Tibial artery (tissue), 4 donors: ENCODE measurements at regions of chr16 and their contacts with region 1.

Region 1: DNA sequence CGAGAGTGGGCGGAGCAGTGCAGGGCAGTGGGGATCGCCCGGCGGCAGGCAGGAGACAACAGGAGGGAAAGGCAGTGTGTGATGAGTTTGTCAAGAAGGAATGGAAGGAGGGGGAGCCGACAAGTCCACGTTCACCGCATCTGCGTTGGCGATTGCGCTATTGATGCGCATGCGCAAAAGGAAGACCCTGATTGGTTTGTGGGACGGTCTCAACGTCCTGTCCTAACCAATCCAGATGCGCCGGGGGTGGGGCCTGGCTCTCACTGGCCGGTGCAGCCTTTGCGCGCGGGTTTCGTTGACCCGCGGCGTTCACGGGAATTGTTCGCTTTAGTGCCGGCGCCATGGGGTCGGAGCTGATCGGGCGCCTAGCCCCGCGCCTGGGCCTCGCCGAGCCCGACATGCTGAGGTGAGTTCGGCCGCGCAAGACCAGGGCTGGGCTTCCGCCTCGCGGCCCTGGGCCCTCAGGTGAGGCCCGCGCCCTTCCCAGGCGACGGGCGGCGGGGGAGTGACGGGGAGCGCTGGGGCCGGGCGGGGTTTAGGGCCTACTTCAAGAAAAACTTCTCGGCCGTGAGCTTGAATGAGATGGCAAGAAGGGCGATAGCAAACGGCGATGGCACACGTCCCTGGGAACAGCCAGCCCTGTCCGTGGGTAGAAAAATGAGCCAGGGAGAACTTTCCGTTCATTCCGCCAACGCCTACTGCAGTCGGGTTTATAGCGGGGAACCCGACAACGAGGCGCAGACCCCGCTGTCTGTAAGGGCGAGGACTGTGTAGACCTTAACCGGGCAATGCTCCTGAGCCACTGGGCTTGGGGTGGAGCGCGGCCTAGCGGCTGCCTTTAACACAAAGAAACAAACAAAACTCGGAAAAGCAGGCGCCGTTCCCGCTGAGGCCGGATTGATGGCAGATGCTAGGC is at the start of gene ORC6:
- DNase-seq: peak; percentile 98 to 99
- H3K4me3 ChIP-seq: peak within 1 kb of the TSS; percentile 75 to 78
- H3K27ac ChIP-seq: peak within 1 kb of the TSS; percentile 89 to 92
- H3K4me1 ChIP-seq: peaks cover 9 to 31% (median 28%) of the 10 kb centered on the region in 4 donors
- H3K27me3 ChIP-seq: no peaks in the 10 kb centered on the region
- CTCF ChIP-seq: peak; percentile 5 to 27

Region 2: DNA sequence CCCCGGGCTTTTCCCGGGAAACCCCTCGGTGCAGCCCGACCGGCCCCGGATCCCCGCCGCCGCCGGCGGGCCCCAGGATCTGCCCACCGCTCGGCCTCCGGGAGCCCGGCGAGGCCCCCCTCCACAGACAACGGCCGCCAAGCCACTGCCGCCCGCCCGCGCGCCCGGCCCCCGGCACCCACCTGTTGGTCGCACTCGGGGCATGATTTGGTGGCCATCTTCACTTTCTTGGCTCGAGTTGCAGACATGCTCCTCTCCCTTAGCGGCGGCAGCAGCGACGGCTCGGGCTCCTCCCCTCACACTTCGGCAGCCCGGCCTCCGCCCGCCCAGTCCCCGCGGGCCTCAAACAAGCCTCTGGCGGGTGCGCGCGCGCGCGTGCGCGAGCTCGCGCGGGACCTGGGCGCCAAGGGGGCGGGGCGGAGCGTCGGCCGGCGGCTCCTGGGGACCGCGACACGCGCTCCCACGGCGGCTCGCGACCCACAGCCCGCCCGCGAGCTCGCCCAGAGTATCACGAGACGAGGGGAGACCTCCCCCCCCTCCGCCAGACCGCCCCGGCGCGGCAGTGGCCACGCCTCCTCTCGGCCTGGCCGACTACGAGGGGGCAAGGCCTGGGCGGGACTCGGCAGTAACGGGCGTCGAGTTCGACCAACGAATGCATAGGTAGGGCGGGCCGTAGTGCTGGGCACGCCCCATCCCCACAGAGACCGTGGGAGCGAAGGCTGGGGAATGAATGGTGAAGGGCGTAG is 141.5 kb after region 1 on chr16 and contains the start of gene C16orf87:
- intact Hi-C with region 1: loop called (anchors 5 kb)
- DNase-seq: peak; percentile 93 to 94
- H3K4me3 ChIP-seq: peak within 1 kb of the TSS; percentile 69 to 90
- H3K27ac ChIP-seq: peak within 1 kb of the TSS; percentile 86 to 87
- H3K4me1 ChIP-seq: peaks cover 0 to 14% (median 5%) of the 10 kb centered on the region in 4 donors
- H3K27me3 ChIP-seq: no peaks in the 10 kb centered on the region
- CTCF ChIP-seq: no peak

Region 3: GRCh38 chr16:46883690-46884512 is 194.3 kb after region 1 on chr16 and contains the start of gene GPT2:
- intact Hi-C with region 1: loop called (anchors 5 kb)
- DNase-seq: peak; percentile 98
- H3K4me3 ChIP-seq: peak within 1 kb of the TSS; percentile 75 to 77
- H3K27ac ChIP-seq: peak within 1 kb of the TSS; percentile 41 to 45
- H3K4me1 ChIP-seq: peaks cover 0 to 10% (median 3%) of the 10 kb centered on the region in 4 donors
- H3K27me3 ChIP-seq: peaks cover 0 to 2% of the 10 kb centered on the region in 2 donors
- CTCF ChIP-seq: peak; percentile 11 to 32

Region 4: DNA sequence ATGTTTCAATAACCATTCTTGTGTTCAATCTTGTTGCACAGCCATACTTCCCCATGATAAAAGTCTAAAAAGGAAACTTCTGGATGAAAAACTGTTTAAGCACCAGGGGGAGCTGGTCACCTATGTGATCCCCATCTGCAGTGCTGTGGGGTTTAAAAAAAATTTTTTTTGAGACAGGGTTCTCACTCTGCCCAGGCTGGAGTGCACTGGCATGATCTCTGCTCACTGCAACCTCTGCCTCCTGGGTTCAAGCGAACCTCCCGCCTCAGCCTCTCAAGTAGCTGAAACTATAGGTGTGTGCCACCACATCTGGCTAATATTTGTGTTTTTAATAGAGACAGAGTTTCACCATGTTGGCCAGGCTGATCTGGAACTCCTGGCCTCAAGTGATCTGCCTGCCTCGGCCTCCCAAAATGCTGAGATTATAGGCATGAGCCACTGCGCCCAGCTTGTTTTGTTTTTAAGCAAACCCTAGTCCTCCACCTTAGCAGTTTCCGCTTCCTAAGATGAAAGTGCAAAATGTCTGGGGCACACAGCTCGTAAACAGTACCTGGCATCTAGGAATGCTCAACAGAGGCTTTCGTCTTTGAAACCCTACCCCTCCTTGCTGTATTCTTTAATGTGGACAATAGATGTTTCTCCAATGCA is 258.4 kb after region 1 on chr16:
- intact Hi-C with region 1: no loop called
- DNase-seq: no peak
- H3K4me3 ChIP-seq: no peak overlapping the region
- H3K27ac ChIP-seq: no peak overlapping the region
- H3K4me1 ChIP-seq: no peaks in the 10 kb centered on the region
- H3K27me3 ChIP-seq: no peaks in the 10 kb centered on the region
- CTCF ChIP-seq: peak in 1 of 2 experiments; percentile 12